CD14-positive monocyte (primary cell): ENCODE measurements at regions of chr12 and their contacts with region 1.

Region 1: DNA sequence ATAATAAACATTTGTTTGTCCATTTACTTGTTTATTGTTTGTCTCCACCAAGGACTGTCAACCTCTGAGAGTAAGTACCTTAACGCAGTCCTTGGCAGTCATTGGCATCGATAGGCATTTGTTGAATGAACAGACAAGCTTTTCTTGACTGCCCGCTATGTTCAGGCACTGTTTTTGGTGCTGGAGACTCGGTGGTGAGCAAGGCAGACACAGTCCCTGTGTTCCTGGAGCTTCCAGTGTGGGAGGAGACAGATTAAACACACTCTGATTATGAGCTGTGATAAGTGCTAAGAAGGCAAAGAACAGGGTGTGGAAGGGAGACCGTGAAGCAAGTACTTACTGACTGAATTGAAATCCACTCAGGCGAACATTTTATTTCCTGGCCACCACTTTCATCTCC is 1.2 kb downstream of the ATP6V0A2 start:
- DNase-seq: no peak
- H3K4me3 ChIP-seq: peak overlapping the region in 1 of 3 experiments; percentile 96
- H3K4me3 Mint-ChIP-seq: peak overlapping the region; percentile 89 to 92
- H3K27ac ChIP-seq: no peak overlapping the region
- H3K27ac Mint-ChIP-seq: peak overlapping the region in 1 of 7 donors; percentile 49
- H3K4me1 ChIP-seq: peaks cover 24 to 26% of the 10 kb centered on the region in 2 donors
- H3K4me1 Mint-ChIP-seq: peaks cover 30% of the 10 kb centered on the region
- H3K27me3 ChIP-seq: no peaks in the 10 kb centered on the region
- H3K27me3 Mint-ChIP-seq: peaks cover 0 to 12% (median 2%) of the 10 kb centered on the region in 3 donors
- CTCF ChIP-seq: no peak

Region 2: DNA sequence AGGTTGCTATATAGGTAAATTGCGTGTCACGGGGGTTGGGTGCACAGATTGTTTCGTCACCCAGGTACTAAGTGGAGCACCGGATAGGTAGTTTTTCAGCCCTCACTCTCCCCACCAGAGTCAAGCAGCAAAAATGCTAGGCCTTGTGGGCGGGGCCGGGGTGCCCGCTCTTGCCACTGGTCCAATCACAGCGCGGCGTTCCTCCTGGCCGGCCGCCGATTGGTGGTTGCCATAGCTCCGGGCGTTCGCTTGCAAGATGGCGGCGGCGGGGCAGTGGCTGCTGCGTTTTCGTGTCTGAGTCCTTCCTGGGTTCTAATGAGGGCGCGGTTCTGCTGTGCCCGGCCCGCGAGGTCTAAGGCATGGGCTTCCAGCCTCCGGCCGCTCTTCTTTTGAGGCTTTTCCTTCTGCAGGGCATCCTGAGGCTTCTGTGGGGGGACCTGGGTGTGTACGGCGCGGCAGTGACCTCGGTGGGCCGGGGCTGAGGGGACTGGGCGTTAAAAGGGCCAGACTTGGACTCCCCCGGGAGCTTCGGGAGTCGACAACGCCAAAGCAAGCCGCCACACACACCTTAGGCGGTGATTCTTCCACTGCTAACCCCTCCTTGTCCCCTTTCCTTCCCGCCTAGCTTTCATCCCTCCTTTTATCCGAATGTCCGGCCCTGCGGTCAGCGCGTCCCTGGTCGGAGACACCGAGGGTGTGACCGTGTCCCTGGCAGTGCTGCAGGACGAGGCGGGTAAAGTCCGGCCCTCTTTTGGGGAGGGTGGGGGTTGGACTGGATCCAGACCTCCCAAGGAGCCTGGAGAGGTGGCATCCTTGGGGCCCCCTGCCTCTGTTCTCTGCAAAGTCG is 42.3 kb before region 1 on chr12 and contains the start of gene TCTN2:
- intact Hi-C with region 1: loop called in 1 of 2 experiments (anchors 5 kb)
- DNase-seq: peak; percentile 75 to 86 (median 86)
- H3K4me3 ChIP-seq: peak within 1 kb of the TSS; percentile 45 to 96 (median 62)
- H3K4me3 Mint-ChIP-seq: peak within 1 kb of the TSS; percentile 88
- H3K27ac ChIP-seq: no peak within 1 kb of the TSS
- H3K27ac Mint-ChIP-seq: peak within 1 kb of the TSS in 2 of 7 donors; percentile 78 to 87
- H3K4me1 ChIP-seq: peaks cover 8 to 14% of the 10 kb centered on the region in 2 donors
- H3K4me1 Mint-ChIP-seq: peaks cover 10% of the 10 kb centered on the region
- H3K27me3 ChIP-seq: no peaks in the 10 kb centered on the region
- H3K27me3 Mint-ChIP-seq: peaks cover 0 to 4% (median 0%) of the 10 kb centered on the region in 3 donors
- CTCF ChIP-seq: no peak
- polyA plus RNA-seq, gene TCTN2: 0.24 to 1.1 TPM in 2 of 3 donors, not detected in the other